T-cell (primary cell): ENCODE measurements at regions of chr12 and their contacts with region 1.

Region 1: DNA sequence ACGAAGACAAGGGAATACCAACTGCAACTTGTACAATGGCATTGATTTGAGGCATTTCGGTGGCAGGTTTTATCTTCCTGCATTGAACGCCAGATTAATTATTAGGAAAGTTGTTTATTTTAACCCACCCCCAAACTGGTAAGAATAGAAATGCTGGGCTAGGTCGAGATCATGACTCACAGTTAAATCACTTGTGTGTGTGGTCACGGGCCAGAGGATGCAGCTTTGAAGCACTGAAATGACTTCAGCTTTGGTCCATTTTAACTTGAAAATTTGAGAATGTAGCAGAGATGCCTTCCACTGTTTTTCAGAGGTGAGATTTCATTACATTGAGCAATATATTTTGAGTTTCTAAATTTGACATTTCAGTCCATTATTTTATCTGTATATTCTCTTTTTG is 23.6 kb upstream of the KCNH3 start:
- DNase-seq: no peak
- ATAC-seq: no peak
- H3K4me3 ChIP-seq: no peak overlapping the region
- H3K4me3 Mint-ChIP-seq: no peak overlapping the region
- H3K27ac ChIP-seq: no peak overlapping the region
- H3K27ac Mint-ChIP-seq: no peak overlapping the region
- H3K4me1 ChIP-seq: peaks cover 0 to 2% of the 10 kb centered on the region in 2 experiments
- H3K4me1 Mint-ChIP-seq: peaks cover 0 to 2% (median 0%) of the 10 kb centered on the region in 3 donors
- H3K27me3 ChIP-seq: no peaks in the 10 kb centered on the region
- H3K27me3 Mint-ChIP-seq: no peaks in the 10 kb centered on the region

Region 2: GRCh38 chr12:49288412-49288853 is 226.8 kb before region 1 on chr12:
- CTCF ChIA-PET with region 1: interaction called, 3 to 20 read pairs
- POLR2A ChIA-PET with region 1: no interaction called
- DNase-seq: peak in 34 of 35 experiments; percentile 22 to 86 (median 58)
- ATAC-seq: peak; percentile 68 to 77 (median 74)
- H3K4me3 ChIP-seq: no peak overlapping the region
- H3K4me3 Mint-ChIP-seq: no peak overlapping the region
- H3K27ac ChIP-seq: no peak overlapping the region
- H3K27ac Mint-ChIP-seq: no peak overlapping the region
- H3K4me1 ChIP-seq: no peaks in the 10 kb centered on the region
- H3K4me1 Mint-ChIP-seq: no peaks in the 10 kb centered on the region
- H3K27me3 ChIP-seq: peaks cover 6 to 54% of the 10 kb centered on the region in 2 experiments
- H3K27me3 Mint-ChIP-seq: peaks cover 29 to 49% of the 10 kb centered on the region in 2 donors

Region 3: DNA sequence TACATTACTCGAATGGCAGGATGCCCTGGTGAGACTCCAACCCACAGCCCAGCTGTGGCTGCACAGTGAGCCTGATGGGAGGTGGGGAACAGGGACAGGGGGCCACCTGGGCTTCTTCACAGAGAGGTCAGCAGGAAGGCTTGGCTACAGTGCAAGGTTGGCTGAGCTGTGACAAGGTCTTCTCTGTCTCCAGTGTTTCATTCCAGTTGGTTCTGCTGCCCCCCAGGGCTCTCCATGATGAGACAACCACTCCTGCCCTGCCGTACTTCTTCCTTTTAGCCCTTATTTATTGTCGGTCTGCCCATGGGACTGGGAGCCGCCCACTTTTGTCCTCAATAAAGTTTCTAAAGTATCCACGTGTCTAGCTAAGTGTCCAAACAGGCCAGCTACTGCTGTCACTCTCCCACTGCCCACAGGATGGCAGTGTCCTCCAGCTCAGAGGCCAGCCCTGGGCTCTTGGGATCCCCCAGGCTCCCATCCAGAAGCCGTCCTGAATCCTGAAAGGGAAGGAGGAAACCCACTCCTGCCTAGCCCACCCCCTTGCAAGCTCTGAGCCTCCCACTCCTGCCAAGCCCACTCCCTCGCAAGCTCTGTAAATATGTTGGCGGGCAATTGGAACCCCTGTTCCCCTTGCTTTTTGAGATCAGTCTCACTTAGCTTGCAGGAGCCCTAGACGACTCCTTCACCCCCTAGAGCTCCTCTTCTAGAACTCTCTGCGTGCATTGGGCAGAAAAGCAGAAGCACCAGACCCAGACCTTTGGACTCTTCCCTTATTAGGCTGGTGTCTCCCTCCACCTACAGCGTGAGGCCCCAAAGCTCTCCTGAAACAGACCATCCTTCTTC is 183.7 kb before region 1 on chr12:
- CTCF ChIA-PET with region 1: interaction called, 5 to 10 read pairs
- POLR2A ChIA-PET with region 1: no interaction called
- DNase-seq: no peak
- ATAC-seq: peak in 3 of 4 experiments; percentile 37 to 67 (median 50)
- H3K4me3 ChIP-seq: no peak overlapping the region
- H3K4me3 Mint-ChIP-seq: no peak overlapping the region
- H3K27ac ChIP-seq: no peak overlapping the region
- H3K27ac Mint-ChIP-seq: no peak overlapping the region
- H3K4me1 ChIP-seq: peaks cover 0 to 14% of the 10 kb centered on the region in 2 experiments
- H3K4me1 Mint-ChIP-seq: peaks cover 1 to 15% (median 6%) of the 10 kb centered on the region in 3 donors
- H3K27me3 ChIP-seq: peaks cover 5 to 63% of the 10 kb centered on the region in 2 experiments
- H3K27me3 Mint-ChIP-seq: peaks cover 36 to 43% of the 10 kb centered on the region in 2 donors

Region 4: DNA sequence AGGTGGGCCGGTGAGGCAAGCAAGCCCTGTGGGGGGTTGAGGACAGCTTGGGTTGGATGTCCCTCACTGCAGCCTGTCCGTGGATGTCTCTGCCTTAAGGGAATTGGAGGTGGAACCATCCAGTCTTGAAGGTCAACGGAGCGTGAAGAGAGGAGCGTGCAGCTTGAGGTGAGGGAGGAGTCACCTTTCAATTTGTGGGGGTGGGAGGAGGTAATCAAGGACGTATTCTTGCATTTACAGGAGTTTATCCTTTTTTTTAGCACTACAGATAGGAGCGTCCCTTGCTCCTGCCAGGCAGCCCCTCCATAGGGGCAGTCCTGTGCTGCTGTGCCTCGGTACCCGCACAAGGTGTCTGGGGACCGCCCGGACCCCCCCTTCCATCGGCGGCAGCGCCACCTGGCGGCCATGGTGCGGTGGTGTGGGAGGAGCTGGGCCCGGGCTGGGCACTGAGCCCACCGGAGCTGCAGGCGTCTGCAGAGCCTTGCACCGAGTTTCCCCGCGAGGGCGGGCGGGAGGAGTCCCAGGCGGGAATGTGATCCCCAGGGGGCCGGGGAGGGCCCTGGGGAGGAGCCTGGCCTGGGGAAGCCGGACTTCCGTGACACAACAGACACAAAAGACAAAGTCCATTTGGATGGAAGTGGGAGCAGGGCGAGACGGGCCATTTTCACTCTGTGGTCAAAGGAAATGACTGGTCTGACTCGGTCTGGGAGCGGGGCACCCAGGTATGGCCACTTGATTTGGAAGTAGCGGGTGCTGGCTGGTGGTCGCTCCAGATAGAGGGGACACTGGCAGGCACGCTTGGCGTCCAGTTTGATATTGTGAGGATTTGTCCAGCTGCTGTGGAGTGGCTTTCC is 167.7 kb before region 1 on chr12:
- CTCF ChIA-PET with region 1: interaction called, 4 to 13 read pairs
- POLR2A ChIA-PET with region 1: no interaction called
- DNase-seq: peak; percentile 44 to 85 (median 71)
- ATAC-seq: peak; percentile 80 to 86 (median 82)
- H3K4me3 ChIP-seq: peak overlapping the region; percentile 47 to 86
- H3K4me3 Mint-ChIP-seq: peak overlapping the region; percentile 73 to 80 (median 80)
- H3K27ac ChIP-seq: no peak overlapping the region
- H3K27ac Mint-ChIP-seq: peak overlapping the region in 1 of 2 donors; percentile 43
- H3K4me1 ChIP-seq: peaks cover 30 to 55% of the 10 kb centered on the region in 2 experiments
- H3K4me1 Mint-ChIP-seq: peaks cover 31 to 48% (median 42%) of the 10 kb centered on the region in 3 donors
- H3K27me3 ChIP-seq: peaks cover 23 to 91% of the 10 kb centered on the region in 2 experiments
- H3K27me3 Mint-ChIP-seq: peaks cover 40 to 75% of the 10 kb centered on the region in 2 donors

Region 5: GRCh38 chr12:49358483-49359141 is 156.7 kb before region 1 on chr12:
- CTCF ChIA-PET with region 1: interaction called, 26 to 209 read pairs
- POLR2A ChIA-PET with region 1: interaction called, 3 to 8 read pairs
- DNase-seq: peak in 28 of 35 experiments; percentile 35 to 86 (median 52)
- ATAC-seq: peak; percentile 83 to 98 (median 94)
- H3K4me3 ChIP-seq: no peak overlapping the region
- H3K4me3 Mint-ChIP-seq: no peak overlapping the region
- H3K27ac ChIP-seq: no peak overlapping the region
- H3K27ac Mint-ChIP-seq: no peak overlapping the region
- H3K4me1 ChIP-seq: no peaks in the 10 kb centered on the region
- H3K4me1 Mint-ChIP-seq: peaks cover 2 to 8% (median 5%) of the 10 kb centered on the region in 3 donors
- H3K27me3 ChIP-seq: peaks cover 0 to 21% of the 10 kb centered on the region in 2 experiments
- H3K27me3 Mint-ChIP-seq: peaks cover 14 to 27% of the 10 kb centered on the region in 2 donors

Region 6: GRCh38 chr12:49366652-49367380 is 148.4 kb before region 1 on chr12:
- CTCF ChIA-PET with region 1: interaction called, 7 to 13 read pairs
- POLR2A ChIA-PET with region 1: interaction called, 4 to 10 read pairs
- DNase-seq: peak; percentile 67 to 89 (median 81)
- ATAC-seq: peak; percentile 83 to 89 (median 87)
- H3K4me3 ChIP-seq: peak overlapping the region; percentile 82 to 97
- H3K4me3 Mint-ChIP-seq: peak overlapping the region; percentile 84 to 97 (median 96)
- H3K27ac ChIP-seq: peak overlapping the region; percentile 64
- H3K27ac Mint-ChIP-seq: peak overlapping the region; percentile 92 to 96
- H3K4me1 ChIP-seq: peaks cover 0 to 15% of the 10 kb centered on the region in 2 experiments
- H3K4me1 Mint-ChIP-seq: peaks cover 30 to 32% (median 32%) of the 10 kb centered on the region in 3 donors
- H3K27me3 ChIP-seq: no peaks in the 10 kb centered on the region
- H3K27me3 Mint-ChIP-seq: no peaks in the 10 kb centered on the region

Region 7: DNA sequence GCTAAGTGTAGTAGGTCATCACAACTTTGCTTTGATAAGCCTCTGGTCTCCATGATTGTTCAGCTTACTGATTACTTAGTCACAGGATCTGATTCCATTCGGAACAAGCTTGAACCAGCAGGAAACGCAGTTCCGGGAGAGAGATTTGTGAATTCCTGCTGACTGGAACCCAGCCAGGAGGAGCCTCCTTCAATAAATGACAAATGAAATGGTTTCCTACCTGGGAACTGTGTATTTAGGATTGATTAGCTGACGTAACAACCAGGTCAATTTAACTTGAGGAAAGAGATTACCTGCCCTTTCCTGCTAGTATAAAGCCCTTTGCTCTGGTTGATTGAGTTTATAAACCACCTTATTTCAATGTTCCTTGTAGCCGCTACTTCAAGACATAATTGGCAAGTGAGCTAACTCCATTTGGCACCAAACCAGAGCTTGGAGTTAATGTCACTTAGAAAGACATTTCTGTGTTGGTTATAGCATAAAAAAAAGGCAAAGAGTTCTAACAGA is 11.5 kb before region 1 on chr12:
- CTCF ChIA-PET with region 1: interaction called, 3 to 14 read pairs
- POLR2A ChIA-PET with region 1: no interaction called
- DNase-seq: no peak
- ATAC-seq: no peak
- H3K4me3 ChIP-seq: no peak overlapping the region
- H3K4me3 Mint-ChIP-seq: no peak overlapping the region
- H3K27ac ChIP-seq: no peak overlapping the region
- H3K27ac Mint-ChIP-seq: no peak overlapping the region
- H3K4me1 ChIP-seq: peaks cover 2 to 4% of the 10 kb centered on the region in 2 experiments
- H3K4me1 Mint-ChIP-seq: peaks cover 8 to 18% (median 16%) of the 10 kb centered on the region in 3 donors
- H3K27me3 ChIP-seq: no peaks in the 10 kb centered on the region
- H3K27me3 Mint-ChIP-seq: no peaks in the 10 kb centered on the region

Region 8: GRCh38 chr12:49750027-49750995 is 235.0 kb after region 1 on chr12:
- CTCF ChIA-PET with region 1: no interaction called
- POLR2A ChIA-PET with region 1: no interaction called
- DNase-seq: peak in 10 of 35 experiments; percentile 2 to 45 (median 14)
- ATAC-seq: peak; percentile 63 to 84 (median 72)
- H3K4me3 ChIP-seq: no peak overlapping the region
- H3K4me3 Mint-ChIP-seq: peak overlapping the region; percentile 43 to 67 (median 43)
- H3K27ac ChIP-seq: peak overlapping the region; percentile 14
- H3K27ac Mint-ChIP-seq: peak overlapping the region; percentile 69 to 79
- H3K4me1 ChIP-seq: peaks cover 39 to 44% of the 10 kb centered on the region in 2 experiments
- H3K4me1 Mint-ChIP-seq: peaks cover 84 to 95% (median 88%) of the 10 kb centered on the region in 3 donors
- H3K27me3 ChIP-seq: no peaks in the 10 kb centered on the region
- H3K27me3 Mint-ChIP-seq: no peaks in the 10 kb centered on the region